GM10248 (cell line): ENCODE measurements at regions of chr2 and their contacts with region 1.

Region 1: DNA sequence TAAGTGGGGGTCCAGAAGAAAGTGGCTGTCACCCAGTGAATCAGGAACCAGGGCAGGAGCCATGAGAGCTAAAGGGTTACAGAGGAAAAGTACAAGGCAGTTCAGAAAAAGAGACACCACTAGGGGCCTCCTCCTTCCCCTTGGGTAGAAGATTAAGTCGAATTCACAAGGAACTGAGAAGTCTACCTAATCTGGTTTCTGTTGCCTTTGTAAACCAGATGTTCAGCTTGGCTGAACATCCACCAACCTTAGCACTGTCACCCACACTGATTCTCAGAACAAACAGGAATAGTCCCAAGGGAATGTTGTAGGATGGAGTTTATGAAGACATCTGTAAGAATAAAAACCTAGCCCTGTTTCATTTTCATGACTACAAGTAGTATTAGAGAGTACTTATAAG is 90.4 kb upstream of the NOSTRIN start:
- DNase-seq: peak; percentile 68
- CTCF ChIP-seq: peak; percentile 36

Region 2: GRCh38 chr2:168687314-168687713 is 24.7 kb before region 1 on chr2:
- CTCF ChIA-PET with region 1: interaction called, 13 read pairs
- POLR2A ChIA-PET with region 1: no interaction called
- DNase-seq: no peak
- CTCF ChIP-seq: peak; percentile 51